AG04449 (cell line): ENCODE measurements at regions of chr1 and their contacts with region 1.

Region 1: GRCh38 chr1:214261206-214262123 is 19.5 kb upstream of the SMYD2 start:
- DNase-seq: peak; percentile 23
- H3K4me3 ChIP-seq: 0 out of 2 replicates have a peak overlapping the region, but pooled peaks have one; percentile 21
- CTCF ChIP-seq: peak; percentile 97

Region 2: GRCh38 chr1:213122514-213122929 is 1138.9 kb before region 1 on chr1:
- CTCF ChIA-PET with region 1: interaction called, 10 read pairs
- POLR2A ChIA-PET with region 1: no interaction called
- DNase-seq: no peak
- H3K4me3 ChIP-seq: no peak overlapping the region
- CTCF ChIP-seq: peak; percentile 13

Region 3: DNA sequence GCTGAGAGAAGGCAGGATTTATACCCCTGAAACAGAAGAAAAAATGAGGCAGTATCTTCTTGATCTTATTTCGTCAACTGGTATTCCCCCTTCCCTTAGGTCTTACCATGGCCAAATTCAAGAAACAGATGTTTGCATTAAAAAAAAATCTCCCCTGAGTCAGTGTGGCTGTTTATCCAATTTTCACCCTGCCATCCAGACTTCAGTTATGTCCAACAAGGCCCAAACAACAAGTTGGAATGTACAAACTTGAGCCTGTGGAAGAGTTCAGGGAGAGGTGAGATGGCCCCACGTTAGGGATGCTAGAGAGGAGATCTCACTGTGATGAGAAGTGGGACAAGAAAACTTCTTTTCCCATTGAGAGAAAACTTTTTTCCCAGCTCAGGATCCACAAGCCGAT is 420.9 kb before region 1 on chr1:
- CTCF ChIA-PET with region 1: no interaction called
- POLR2A ChIA-PET with region 1: no interaction called
- DNase-seq: no peak
- H3K4me3 ChIP-seq: no peak overlapping the region
- CTCF ChIP-seq: no peak

Region 4: DNA sequence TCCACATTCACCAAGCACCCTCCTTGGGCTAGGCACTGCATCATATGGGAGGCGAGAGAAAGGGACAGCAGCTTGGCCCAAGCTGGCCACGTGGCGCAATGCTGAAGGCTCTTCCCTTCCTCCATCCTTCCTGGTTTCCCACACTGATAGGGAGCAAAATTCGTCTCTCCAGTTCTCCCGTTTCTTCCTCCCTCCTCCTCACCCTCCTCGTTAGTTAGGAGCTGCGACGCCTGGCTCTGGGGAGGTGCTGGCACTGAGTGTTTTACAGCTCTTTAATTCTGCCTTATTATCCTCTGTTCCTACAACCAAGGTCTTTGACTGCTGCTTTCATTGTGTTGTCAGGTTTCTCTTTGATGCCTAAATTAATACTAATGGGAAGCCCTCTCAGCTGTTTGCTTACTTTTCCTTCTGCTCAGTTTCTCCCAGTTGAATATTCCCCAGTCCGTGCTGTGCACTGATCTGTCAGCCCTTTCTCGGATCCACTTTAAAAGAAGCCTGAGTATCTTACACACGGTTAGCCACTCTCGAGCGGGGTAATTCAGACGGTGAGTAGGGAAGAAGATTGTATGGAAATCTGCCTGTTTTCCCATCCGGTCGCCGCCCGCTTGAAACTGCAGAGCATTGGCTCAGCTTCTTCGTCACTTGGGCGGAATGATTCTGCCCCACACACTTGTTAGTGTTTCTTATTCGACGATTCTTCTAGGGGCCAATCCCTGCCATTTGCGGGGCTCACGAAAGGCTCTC is 36.7 kb before region 1 on chr1:
- CTCF ChIA-PET with region 1: interaction called, 23 read pairs
- POLR2A ChIA-PET with region 1: no interaction called
- DNase-seq: no peak
- H3K4me3 ChIP-seq: peak overlapping the region; percentile 48
- CTCF ChIP-seq: no peak

Region 5: GRCh38 chr1:214281021-214281719 is 19.7 kb after region 1 on chr1 and contains the start of gene SMYD2:
- CTCF ChIA-PET with region 1: interaction called, 74 read pairs
- POLR2A ChIA-PET with region 1: no interaction called
- DNase-seq: no peak
- H3K4me3 ChIP-seq: peak within 1 kb of the TSS; percentile 92
- CTCF ChIP-seq: no peak

Region 6: GRCh38 chr1:214303141-214303930 is 41.9 kb after region 1 on chr1:
- CTCF ChIA-PET with region 1: interaction called, 42 read pairs
- POLR2A ChIA-PET with region 1: no interaction called
- DNase-seq: no peak
- H3K4me3 ChIP-seq: no peak overlapping the region
- CTCF ChIP-seq: no peak

Region 7: GRCh38 chr1:214337511-214337910 is 76.0 kb after region 1 on chr1:
- CTCF ChIA-PET with region 1: interaction called, 477 read pairs
- POLR2A ChIA-PET with region 1: no interaction called
- DNase-seq: no peak
- H3K4me3 ChIP-seq: no peak overlapping the region
- CTCF ChIP-seq: no peak

Region 8: DNA sequence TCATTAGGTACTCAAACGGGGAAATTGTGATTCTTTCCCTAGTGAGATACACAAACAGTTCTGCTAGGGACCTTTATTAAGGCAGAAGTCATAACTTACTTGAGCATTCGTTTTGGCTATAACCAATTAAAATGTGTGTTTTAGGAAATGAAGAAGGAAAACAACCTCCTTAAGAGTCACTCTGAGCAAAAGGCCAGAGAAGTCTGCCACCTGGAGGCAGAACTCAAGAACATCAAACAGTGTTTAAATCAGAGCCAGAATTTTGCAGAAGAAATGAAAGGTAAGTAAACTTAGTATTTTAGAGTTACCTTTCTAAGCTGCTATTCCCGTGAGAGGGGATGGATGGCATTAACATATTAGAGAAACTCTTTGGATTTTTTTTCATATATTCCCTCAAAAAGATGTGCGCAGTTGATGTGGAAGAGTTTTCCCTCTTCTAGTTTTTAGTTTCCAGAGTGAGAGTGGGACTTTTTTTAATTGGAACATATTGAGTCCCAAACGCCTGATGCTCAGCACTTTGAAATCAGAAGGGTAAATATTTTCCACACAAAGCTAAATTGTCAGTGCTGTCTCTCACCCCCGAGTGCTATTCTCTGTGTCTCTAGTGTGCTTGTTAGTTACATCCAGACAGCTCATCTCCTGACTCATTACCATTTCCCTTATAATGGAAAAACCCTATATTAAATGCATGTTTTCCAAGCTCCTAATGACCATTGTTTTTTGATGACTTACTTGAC is 376.4 kb after region 1 on chr1:
- CTCF ChIA-PET with region 1: interaction called, 23 read pairs
- POLR2A ChIA-PET with region 1: no interaction called
- DNase-seq: no peak
- H3K4me3 ChIP-seq: no peak overlapping the region
- CTCF ChIP-seq: peak; percentile 57